Tibial artery (tissue), 4 donors: ENCODE measurements at regions of chr17 and their contacts with region 1.

Region 1: GRCh38 chr17:47970704-47971463 is at the start of gene CDK5RAP3:
- DNase-seq: peak; percentile 100
- H3K4me3 ChIP-seq: peak within 1 kb of the TSS; percentile 89 to 100
- H3K27ac ChIP-seq: peak within 1 kb of the TSS; percentile 88 to 93
- H3K4me1 ChIP-seq: peaks cover 0 to 21% (median 15%) of the 10 kb centered on the region in 4 donors
- H3K27me3 ChIP-seq: no peaks in the 10 kb centered on the region
- CTCF ChIP-seq: peak; percentile 98

Region 2: GRCh38 chr17:47862621-47863440 is 108.1 kb before region 1 on chr17:
- intact Hi-C with region 1: no loop called
- DNase-seq: no peak
- H3K4me3 ChIP-seq: no peak overlapping the region
- H3K27ac ChIP-seq: no peak overlapping the region
- H3K4me1 ChIP-seq: peaks cover 0 to 7% (median 3%) of the 10 kb centered on the region in 4 donors
- H3K27me3 ChIP-seq: peaks cover 0 to 61% of the 10 kb centered on the region in 2 donors
- CTCF ChIP-seq: no peak

Region 3: DNA sequence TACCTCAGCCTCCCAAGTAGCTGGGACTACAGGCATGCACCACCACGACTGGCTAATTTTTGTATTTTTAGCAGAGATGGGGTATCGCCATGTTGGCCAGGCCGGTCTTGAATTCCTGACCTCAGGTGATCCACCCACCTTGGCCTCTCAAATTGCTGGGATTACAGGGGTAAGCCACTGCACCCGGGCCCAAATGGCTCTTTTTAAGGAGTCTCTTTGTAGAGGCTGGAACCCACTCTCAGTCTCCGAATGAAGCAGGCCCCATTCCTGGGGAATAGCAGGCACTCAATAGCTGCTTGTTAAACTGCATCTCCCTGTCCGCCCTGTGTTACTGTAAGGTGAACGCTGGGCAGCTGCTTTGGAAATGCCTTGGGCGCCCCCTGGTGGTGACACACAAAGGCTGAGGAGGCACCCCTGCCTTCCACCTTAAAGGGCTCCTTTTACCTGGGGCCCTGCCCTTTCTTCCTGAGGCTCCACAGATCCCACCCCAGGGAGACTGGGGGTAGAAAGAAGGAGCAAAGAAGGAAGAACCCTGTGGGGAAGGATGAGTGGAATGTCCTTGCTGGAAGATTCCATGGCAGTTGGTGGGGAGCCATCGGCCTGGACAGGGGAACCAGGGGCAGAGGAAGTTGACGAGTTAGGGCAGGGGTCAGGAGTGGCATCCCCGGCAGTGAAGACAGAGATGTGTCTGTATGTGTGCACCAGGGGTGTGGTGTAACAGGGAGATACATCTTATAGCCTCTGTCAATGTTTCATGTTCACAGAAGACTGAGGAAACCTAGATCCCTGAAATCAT is 81.0 kb before region 1 on chr17:
- intact Hi-C with region 1: loop called (anchors 10 kb)
- DNase-seq: peak; percentile 84 to 89
- H3K4me3 ChIP-seq: no peak overlapping the region
- H3K27ac ChIP-seq: no peak overlapping the region
- H3K4me1 ChIP-seq: peaks cover 0 to 15% (median 7%) of the 10 kb centered on the region in 4 donors
- H3K27me3 ChIP-seq: no peaks in the 10 kb centered on the region
- CTCF ChIP-seq: peak; percentile 93 to 95

Region 4: DNA sequence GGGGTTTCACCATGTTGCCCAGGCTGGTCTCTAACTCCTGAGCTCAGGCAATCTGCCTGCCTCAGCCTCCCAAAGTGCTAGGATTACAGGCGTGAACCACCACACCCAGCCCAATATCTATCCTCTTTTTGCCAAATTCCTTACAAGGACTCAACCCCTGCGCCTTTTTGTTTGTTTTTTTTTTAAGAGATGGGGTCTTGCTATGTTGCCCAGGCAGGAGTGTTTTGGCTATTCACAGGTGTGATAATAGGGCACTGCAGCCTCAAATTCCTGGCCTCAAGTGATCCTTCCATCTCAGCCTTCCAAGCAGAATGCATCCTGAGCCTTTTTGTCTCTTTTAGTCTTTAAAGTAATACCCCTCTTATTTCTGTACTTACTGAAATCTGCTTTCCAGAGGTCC is 57.8 kb before region 1 on chr17:
- intact Hi-C with region 1: loop called (anchors 2 kb)
- DNase-seq: no peak
- H3K4me3 ChIP-seq: no peak overlapping the region
- H3K27ac ChIP-seq: no peak overlapping the region
- H3K4me1 ChIP-seq: peaks cover 0 to 67% (median 24%) of the 10 kb centered on the region in 4 donors
- H3K27me3 ChIP-seq: no peaks in the 10 kb centered on the region
- CTCF ChIP-seq: no peak